ENCODE measurements at regions of chr3 and their contacts with region 1.

Region 1: DNA sequence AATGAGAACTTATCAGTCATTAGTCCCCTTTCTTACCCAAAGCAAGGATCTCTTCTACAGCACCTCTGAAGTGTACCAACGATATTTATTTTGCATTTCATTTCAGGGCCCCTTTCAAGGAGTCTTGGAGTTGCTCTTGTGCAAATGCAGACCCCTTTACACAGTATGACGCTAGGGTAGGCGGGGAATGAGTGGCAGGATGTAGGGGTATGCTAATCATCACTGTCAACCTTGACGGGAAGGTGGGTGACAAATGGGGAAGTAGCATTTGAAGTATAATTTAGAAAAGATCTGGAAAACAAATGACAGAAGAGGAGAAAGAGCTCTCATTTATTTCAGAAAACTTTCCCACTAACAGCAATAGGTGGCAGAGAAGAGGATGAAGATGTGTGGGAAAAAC is 94.4 kb downstream of the LRRN1 start:
- DNase-seq: no peak
- ATAC-seq: no peak
- H3K4me3 ChIP-seq: no peak overlapping the region
- H3K4me3 Mint-ChIP-seq: no peak overlapping the region
- H3K27ac ChIP-seq: no peak overlapping the region
- H3K27ac Mint-ChIP-seq: no peak overlapping the region
- H3K4me1 ChIP-seq: no peaks in the 10 kb centered on the region
- H3K4me1 Mint-ChIP-seq: no peaks in the 10 kb centered on the region
- H3K27me3 ChIP-seq: no peaks in the 10 kb centered on the region
- H3K27me3 Mint-ChIP-seq: peaks cover 0 to 4% (median 0%) of the 10 kb centered on the region in 5 donors

Region 2: DNA sequence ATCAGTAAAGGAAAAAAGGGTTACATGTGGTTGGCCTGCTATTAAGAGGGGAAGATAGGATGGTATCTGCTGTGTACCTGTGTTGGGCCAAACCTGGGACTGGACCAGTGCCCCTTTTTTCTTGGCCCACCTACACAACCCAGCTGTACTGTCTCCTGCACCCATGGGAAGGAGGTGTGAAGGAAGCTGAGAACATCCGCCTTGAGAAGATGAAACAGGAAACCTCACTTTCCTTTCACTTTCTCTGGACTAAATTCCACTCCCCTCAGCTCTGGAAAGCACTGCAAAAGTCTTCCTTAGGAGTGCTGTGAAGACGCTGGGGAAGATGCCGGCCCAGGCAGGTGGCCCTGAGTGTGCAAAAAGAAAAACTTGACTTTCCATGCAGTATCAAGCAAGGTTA is 56.7 kb before region 1 on chr3:
- CTCF ChIA-PET with region 1: no interaction called
- POLR2A ChIA-PET with region 1: no interaction called
- intact Hi-C with region 1: loop called in 1 of 2 experiments (anchors 2 kb)
- DNase-seq: no peak
- ATAC-seq: no peak
- H3K4me3 ChIP-seq: no peak overlapping the region
- H3K4me3 Mint-ChIP-seq: peak overlapping the region in 1 of 10 donors; percentile 46
- H3K27ac ChIP-seq: no peak overlapping the region
- H3K27ac Mint-ChIP-seq: peak overlapping the region in 1 of 9 donors; percentile 74
- H3K4me1 ChIP-seq: no peaks in the 10 kb centered on the region
- H3K4me1 Mint-ChIP-seq: peaks cover 0 to 13% (median 9%) of the 10 kb centered on the region in 7 donors
- H3K27me3 ChIP-seq: no peaks in the 10 kb centered on the region
- H3K27me3 Mint-ChIP-seq: no peaks in the 10 kb centered on the region